Endothelial cell of umbilical vein (primary cell): ENCODE measurements at regions of chr3 and their contacts with region 1.

Region 1: DNA sequence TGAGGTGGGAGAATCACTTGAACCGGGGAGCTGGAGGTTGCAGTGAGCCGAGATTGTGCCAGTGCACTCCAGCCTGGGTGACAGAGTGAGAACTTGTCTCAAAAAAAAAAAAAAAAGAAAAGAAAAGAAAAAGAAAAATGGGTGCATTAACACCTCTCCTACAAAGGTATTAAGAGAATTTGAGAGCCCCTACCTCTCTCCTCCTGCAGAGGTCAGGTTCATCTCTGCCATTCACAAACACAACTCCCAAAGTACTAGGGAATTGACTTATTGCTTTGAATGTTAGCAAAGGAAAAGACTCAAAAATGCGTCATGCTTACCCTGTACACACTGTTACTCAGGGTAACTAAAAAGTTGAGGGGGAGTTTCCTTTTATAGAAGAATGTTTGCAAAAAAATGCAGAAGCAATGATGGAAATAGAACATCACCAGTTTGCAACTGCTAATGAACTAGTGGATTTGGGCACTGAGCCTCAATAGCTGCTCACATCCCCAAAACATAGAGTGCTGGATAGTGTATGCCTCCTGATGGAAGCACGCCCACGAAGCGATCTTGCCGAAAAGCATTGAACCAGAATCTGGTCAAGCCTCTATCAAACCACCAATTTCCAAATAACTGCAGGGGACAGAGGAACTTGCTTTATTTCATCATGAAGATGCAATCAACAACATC is 15.5 kb upstream of the LYZL4 start:
- DNase-seq: no peak
- H3K4me3 ChIP-seq: no peak overlapping the region
- H3K27ac ChIP-seq: no peak overlapping the region
- H3K4me1 ChIP-seq: no peaks in the 10 kb centered on the region
- H3K27me3 ChIP-seq: no peaks in the 10 kb centered on the region
- CTCF ChIP-seq: no peak
- POLR2A ChIP-seq: no peak

Region 2: DNA sequence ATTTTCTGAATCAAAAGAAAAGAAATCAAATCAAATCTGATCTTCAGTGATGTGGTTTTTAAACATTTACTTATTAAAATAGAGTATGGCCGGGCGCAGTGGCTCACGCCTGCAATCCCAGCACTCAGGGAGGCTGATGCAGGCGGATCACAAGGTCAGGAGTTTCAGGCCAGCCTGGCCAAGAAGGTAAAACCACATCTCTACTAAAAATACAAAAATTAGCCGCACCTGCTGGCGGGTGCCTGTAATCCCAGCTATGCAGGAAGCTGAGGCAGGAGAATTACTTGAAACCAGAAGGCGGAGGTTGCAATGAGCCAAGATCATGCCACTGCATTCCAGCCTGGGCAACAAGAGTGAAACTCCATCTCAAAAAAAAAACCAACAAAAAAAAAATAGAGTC is 633.1 kb before region 1 on chr3:
- CTCF ChIA-PET with region 1: no interaction called
- POLR2A ChIA-PET with region 1: no interaction called
- dilution Hi-C with region 1: no loop called
- intact Hi-C with region 1: loop called (anchors 5 kb)
- DNase-seq: no peak
- H3K4me3 ChIP-seq: no peak overlapping the region
- H3K27ac ChIP-seq: no peak overlapping the region
- H3K4me1 ChIP-seq: no peaks in the 10 kb centered on the region
- H3K27me3 ChIP-seq: no peaks in the 10 kb centered on the region
- CTCF ChIP-seq: no peak
- POLR2A ChIP-seq: no peak

Region 3: GRCh38 chr3:42402394-42403096 is 23.3 kb before region 1 on chr3:
- CTCF ChIA-PET with region 1: interaction called, 3 read pairs
- POLR2A ChIA-PET with region 1: interaction called, 11 read pairs
- dilution Hi-C with region 1: no loop called
- intact Hi-C with region 1: no loop called
- DNase-seq: no peak
- H3K4me3 ChIP-seq: no peak overlapping the region
- H3K27ac ChIP-seq: no peak overlapping the region
- H3K4me1 ChIP-seq: no peaks in the 10 kb centered on the region
- H3K27me3 ChIP-seq: peaks cover 0 to 3% of the 10 kb centered on the region in 2 experiments
- CTCF ChIP-seq: no peak
- POLR2A ChIP-seq: no peak